Mucosa of descending colon (tissue), 3 donors: ENCODE measurements at regions of chr4 and their contacts with region 1.

Region 1: DNA sequence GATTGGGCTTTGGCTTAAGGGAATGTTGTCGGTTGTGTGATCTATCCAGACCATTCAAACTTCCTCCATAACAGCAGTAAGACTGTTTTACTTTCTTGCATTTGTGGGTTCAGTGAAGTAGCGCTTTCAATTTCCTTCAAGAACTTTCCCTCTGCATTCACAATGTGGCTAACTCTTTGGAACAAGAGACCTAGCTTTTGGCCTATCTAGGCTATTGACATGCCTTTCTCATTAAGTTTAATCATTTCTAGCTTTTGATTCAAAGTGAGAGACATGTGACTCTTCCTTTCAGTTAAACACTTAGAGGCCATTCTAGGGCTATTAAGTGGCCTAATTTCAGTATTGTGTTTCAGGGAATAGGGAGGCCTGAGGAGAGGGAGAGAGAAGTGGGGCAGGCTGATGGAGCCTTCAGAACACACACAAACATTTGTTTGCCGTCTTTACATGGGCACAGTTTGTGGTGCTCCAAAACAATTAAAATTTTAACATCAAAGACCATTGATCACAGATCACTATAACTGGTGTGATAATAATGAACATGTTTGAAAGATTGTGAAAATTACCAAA is 34.1 kb downstream of the ADH5 start:
- DNase-seq: no peak
- ATAC-seq: no peak
- H3K4me3 ChIP-seq: no peak overlapping the region
- H3K4me1 ChIP-seq: no peaks in the 10 kb centered on the region
- CTCF ChIP-seq: no peak

Region 2: DNA sequence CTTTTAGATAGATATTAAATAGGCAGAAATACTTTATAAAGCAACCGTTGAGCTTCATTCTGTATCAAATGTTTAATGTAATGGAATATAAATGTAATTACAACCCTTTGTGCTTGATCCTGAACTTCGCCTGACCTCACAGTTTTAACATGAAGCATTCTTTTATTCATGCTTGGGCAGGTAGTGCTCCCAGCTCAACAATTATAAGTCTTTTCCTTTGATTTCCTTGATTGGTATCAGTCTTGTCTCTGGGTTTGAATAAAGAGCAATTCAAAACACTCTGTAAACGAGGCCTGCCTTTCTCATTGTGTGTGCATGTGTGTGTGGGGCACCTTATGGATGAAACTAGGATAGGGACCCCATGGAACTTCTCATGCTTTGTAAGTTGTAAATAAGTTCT is 52.2 kb before region 1 on chr4:
- intact Hi-C with region 1: loop called in 1 of 2 experiments (anchors 10 kb)
- DNase-seq: no peak
- ATAC-seq: no peak
- H3K4me3 ChIP-seq: no peak overlapping the region
- H3K4me1 ChIP-seq: peaks cover 6% of the 10 kb centered on the region
- CTCF ChIP-seq: no peak